ENCODE measurements at regions of chr3 and their contacts with region 1.

Region 1: GRCh38 chr3:151560738-151561137 is 99.9 kb upstream of the IGSF10 start:
- DNase-seq: no peak
- H3K4me3 ChIP-seq: no peak overlapping the region
- H3K27ac ChIP-seq: peak overlapping the region; percentile 21
- H3K4me1 ChIP-seq: peaks cover 65% of the 10 kb centered on the region
- H3K27me3 ChIP-seq: no peaks in the 10 kb centered on the region
- CTCF ChIP-seq: no peak

Region 2: GRCh38 chr3:151421938-151422337 is 138.8 kb before region 1 on chr3:
- CTCF ChIA-PET with region 1: no interaction called
- POLR2A ChIA-PET with region 1: no interaction called
- intact Hi-C with region 1: no loop called
- DNase-seq: peak; percentile 45
- H3K4me3 ChIP-seq: no peak overlapping the region
- H3K27ac ChIP-seq: no peak overlapping the region
- H3K4me1 ChIP-seq: peaks cover 20% of the 10 kb centered on the region
- H3K27me3 ChIP-seq: no peaks in the 10 kb centered on the region
- CTCF ChIP-seq: peak; percentile 45; the same call in 1 of the 2 replicates

Region 3: DNA sequence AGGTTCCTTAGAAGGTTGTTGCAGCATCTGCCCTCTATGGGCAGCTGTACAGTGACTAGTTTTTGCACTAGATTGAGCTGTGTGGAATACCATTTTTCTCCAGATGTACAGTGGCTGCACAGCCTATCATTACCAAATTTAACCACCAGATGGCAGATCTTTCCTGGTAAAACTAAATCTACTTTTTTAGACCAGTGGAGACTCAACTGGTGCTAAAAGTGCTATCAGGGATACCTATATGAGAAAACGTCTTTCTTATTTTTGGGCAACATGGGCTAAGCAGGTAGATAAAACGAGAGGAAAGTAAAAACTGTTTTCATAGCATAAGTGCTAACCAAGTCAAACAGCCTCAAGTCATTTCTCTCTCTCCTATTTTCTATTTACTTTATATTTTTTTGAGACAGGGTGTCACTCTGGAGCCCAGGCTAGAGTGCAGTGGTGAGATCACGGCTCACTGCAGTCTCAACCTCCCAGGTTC is 121.0 kb before region 1 on chr3:
- CTCF ChIA-PET with region 1: no interaction called
- POLR2A ChIA-PET with region 1: no interaction called
- intact Hi-C with region 1: loop called (anchors 5 kb)
- DNase-seq: peak; percentile 90
- H3K4me3 ChIP-seq: no peak overlapping the region
- H3K27ac ChIP-seq: peak overlapping the region; percentile 34
- H3K4me1 ChIP-seq: peaks cover 22% of the 10 kb centered on the region
- H3K27me3 ChIP-seq: no peaks in the 10 kb centered on the region
- CTCF ChIP-seq: peak; percentile 77

Region 4: DNA sequence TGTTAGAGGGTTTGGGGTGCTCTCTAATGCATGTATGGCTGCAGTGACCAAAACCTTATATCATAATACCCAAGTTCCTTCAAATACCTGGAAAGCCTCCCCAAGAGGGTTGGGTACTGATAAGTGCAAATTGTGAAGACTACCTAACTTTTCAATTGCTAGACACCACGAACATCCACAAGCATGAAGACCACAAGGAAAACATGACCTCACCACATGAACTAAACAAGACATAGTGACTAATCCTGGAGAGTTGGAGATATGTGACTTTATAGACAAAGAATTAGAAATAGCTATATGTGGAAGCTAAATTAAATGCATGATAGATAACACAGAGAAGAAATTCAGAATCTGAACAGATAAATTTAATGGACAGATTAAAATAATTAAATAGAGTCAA is 149.1 kb after region 1 on chr3:
- CTCF ChIA-PET with region 1: no interaction called
- POLR2A ChIA-PET with region 1: no interaction called
- intact Hi-C with region 1: no loop called
- DNase-seq: no peak
- H3K4me3 ChIP-seq: no peak overlapping the region
- H3K27ac ChIP-seq: no peak overlapping the region
- H3K4me1 ChIP-seq: no peaks in the 10 kb centered on the region
- H3K27me3 ChIP-seq: no peaks in the 10 kb centered on the region
- CTCF ChIP-seq: no peak